A549 (cell line): ENCODE measurements at regions of chr15 and their contacts with region 1.

Region 1: GRCh38 chr15:48285329-48286214 is 45.7 kb upstream of the DUT start:
- DNase-seq: peak; percentile 38 to 71
- ATAC-seq: peak; percentile 88 to 89
- H3K4me3 ChIP-seq: peak overlapping the region; percentile 27; the same call in 1 of the 3 replicates
- H3K27ac ChIP-seq: peak overlapping the region in 1 of 2 experiments; percentile 35; a peak in 1 of 6 replicates
- H3K4me1 ChIP-seq: peaks cover 4% of the 10 kb centered on the region; the same call in 1 of the 3 replicates
- CTCF ChIP-seq: peak; percentile 60
- EP300 ChIP-seq: no peak
- POLR2A ChIP-seq: no peak
- RAD21 ChIP-seq: peak; percentile 51 to 60

Region 2: GRCh38 chr15:47196057-47196456 is 1089.5 kb before region 1 on chr15:
- CTCF ChIA-PET with region 1: interaction called, 10 read pairs
- POLR2A ChIA-PET with region 1: no interaction called
- DNase-seq: peak; percentile 6 to 66
- ATAC-seq: peak; percentile 94 to 96
- H3K4me3 ChIP-seq: no peak overlapping the region
- H3K27ac ChIP-seq: no peak overlapping the region
- H3K4me1 ChIP-seq: no peaks in the 10 kb centered on the region
- CTCF ChIP-seq: peak; percentile 39; the same call in 2 of the 3 replicates
- EP300 ChIP-seq: no peak
- POLR2A ChIP-seq: no peak
- RAD21 ChIP-seq: peak; percentile 70 to 76

Region 3: GRCh38 chr15:48297668-48298067 is 12.1 kb after region 1 on chr15:
- CTCF ChIA-PET with region 1: interaction called, 10 read pairs
- POLR2A ChIA-PET with region 1: no interaction called
- DNase-seq: no peak
- ATAC-seq: no peak
- H3K4me3 ChIP-seq: no peak overlapping the region
- H3K27ac ChIP-seq: no peak overlapping the region
- H3K4me1 ChIP-seq: no peaks in the 10 kb centered on the region
- CTCF ChIP-seq: no peak
- EP300 ChIP-seq: no peak
- POLR2A ChIP-seq: no peak
- RAD21 ChIP-seq: no peak

Region 4: DNA sequence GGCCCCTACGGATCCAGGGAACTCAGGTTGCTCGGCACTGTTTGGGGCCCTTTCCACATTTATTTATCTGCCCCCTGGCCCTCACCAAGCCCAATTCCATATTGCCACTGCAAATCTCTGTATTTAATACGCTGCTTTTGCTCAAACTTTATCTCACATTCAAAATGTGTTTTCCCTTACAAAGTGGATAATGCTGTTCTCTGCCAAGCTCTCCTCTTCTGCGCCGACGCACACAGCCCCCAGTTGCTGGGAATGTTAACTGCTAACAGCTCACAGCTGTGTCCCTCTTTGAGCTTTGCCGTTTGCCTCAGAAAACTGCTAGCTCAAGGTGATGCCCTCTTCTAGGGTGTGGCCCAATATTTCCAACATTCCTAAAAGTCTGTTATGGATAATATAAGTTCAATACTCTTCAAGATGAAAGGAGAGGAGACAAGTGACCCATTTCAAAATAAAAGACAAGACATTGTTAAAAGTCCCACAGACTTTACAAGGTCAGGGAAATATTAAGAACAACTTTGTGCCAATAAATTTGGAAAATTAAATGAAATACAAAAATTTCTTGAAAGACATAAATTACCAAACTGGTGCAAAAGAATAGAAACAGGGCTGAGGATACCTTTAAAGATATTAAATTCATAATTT is 372.5 kb after region 1 on chr15:
- CTCF ChIA-PET with region 1: no interaction called
- POLR2A ChIA-PET with region 1: no interaction called
- DNase-seq: no peak
- ATAC-seq: no peak
- H3K4me3 ChIP-seq: no peak overlapping the region
- H3K27ac ChIP-seq: no peak overlapping the region
- H3K4me1 ChIP-seq: no peaks in the 10 kb centered on the region
- CTCF ChIP-seq: no peak
- EP300 ChIP-seq: no peak
- POLR2A ChIP-seq: no peak
- RAD21 ChIP-seq: no peak